ENCODE measurements at regions of chr3 and their contacts with region 1.

Region 1: GRCh38 chr3:168615493-168616020 is 519.8 kb upstream of the GOLIM4 start:
- DNase-seq: no peak
- ATAC-seq: peak; percentile 52
- H3K4me3 ChIP-seq: no peak overlapping the region
- H3K27ac ChIP-seq: no peak overlapping the region; the same call in 1 of the 2 replicates
- H3K4me1 ChIP-seq: peaks cover 4% of the 10 kb centered on the region; the same call in 1 of the 2 replicates
- H3K27me3 ChIP-seq: no peaks in the 10 kb centered on the region
- CTCF ChIP-seq: no peak
- EP300 ChIP-seq: no peak
- POLR2A ChIP-seq: no peak
- RAD21 ChIP-seq: no peak

Region 2: DNA sequence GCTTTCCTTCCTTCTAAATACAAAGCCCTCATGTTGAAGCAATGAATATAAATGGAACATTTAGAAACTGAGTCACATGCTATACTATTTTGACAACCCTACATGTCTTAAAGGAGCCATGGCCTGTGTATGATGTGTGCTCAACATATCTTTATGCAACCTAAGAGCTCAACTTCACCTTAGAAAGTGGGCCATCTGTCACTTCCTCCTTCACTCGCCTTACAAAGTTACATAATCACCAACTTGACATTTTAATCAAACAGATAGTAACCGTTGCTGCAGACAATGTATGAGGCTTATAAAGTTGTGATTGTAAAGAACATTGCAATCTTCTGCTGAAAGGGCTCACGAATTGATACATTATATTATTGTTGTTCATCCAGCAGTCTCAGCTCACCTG is 716.5 kb before region 1 on chr3:
- CTCF ChIA-PET with region 1: no interaction called
- POLR2A ChIA-PET with region 1: no interaction called
- RAD21 ChIA-PET with region 1: no interaction called
- SMC1A ChIA-PET with region 1: no interaction called
- in situ Hi-C with region 1: no loop called
- intact Hi-C with region 1: no loop called
- DNase-seq: no peak
- ATAC-seq: no peak
- H3K4me3 ChIP-seq: no peak overlapping the region
- H3K27ac ChIP-seq: no peak overlapping the region
- H3K4me1 ChIP-seq: no peaks in the 10 kb centered on the region
- H3K27me3 ChIP-seq: no peaks in the 10 kb centered on the region
- CTCF ChIP-seq: no peak
- EP300 ChIP-seq: no peak
- POLR2A ChIP-seq: no peak
- RAD21 ChIP-seq: no peak

Region 3: GRCh38 chr3:167983583-167983982 is 632.0 kb before region 1 on chr3:
- CTCF ChIA-PET with region 1: no interaction called
- POLR2A ChIA-PET with region 1: no interaction called
- RAD21 ChIA-PET with region 1: no interaction called
- SMC1A ChIA-PET with region 1: no interaction called
- in situ Hi-C with region 1: no loop called
- intact Hi-C with region 1: no loop called
- DNase-seq: no peak
- ATAC-seq: no peak
- H3K4me3 ChIP-seq: no peak overlapping the region
- H3K27ac ChIP-seq: no peak overlapping the region
- H3K4me1 ChIP-seq: no peaks in the 10 kb centered on the region
- H3K27me3 ChIP-seq: no peaks in the 10 kb centered on the region; a peak in 2 of 4 replicates
- CTCF ChIP-seq: no peak
- EP300 ChIP-seq: no peak
- POLR2A ChIP-seq: no peak
- RAD21 ChIP-seq: no peak

Region 4: GRCh38 chr3:168220556-168220955 is 395.0 kb before region 1 on chr3:
- CTCF ChIA-PET with region 1: no interaction called
- POLR2A ChIA-PET with region 1: no interaction called
- RAD21 ChIA-PET with region 1: no interaction called
- SMC1A ChIA-PET with region 1: no interaction called
- in situ Hi-C with region 1: no loop called
- intact Hi-C with region 1: no loop called
- DNase-seq: no peak
- ATAC-seq: no peak
- H3K4me3 ChIP-seq: no peak overlapping the region
- H3K27ac ChIP-seq: no peak overlapping the region
- H3K4me1 ChIP-seq: no peaks in the 10 kb centered on the region
- H3K27me3 ChIP-seq: 0 out of 4 replicates have a peak, but pooled peaks cover 0 to 2% of the 10 kb centered on the region in 2 experiments
- CTCF ChIP-seq: no peak
- EP300 ChIP-seq: no peak
- POLR2A ChIP-seq: no peak
- RAD21 ChIP-seq: no peak

Region 5: DNA sequence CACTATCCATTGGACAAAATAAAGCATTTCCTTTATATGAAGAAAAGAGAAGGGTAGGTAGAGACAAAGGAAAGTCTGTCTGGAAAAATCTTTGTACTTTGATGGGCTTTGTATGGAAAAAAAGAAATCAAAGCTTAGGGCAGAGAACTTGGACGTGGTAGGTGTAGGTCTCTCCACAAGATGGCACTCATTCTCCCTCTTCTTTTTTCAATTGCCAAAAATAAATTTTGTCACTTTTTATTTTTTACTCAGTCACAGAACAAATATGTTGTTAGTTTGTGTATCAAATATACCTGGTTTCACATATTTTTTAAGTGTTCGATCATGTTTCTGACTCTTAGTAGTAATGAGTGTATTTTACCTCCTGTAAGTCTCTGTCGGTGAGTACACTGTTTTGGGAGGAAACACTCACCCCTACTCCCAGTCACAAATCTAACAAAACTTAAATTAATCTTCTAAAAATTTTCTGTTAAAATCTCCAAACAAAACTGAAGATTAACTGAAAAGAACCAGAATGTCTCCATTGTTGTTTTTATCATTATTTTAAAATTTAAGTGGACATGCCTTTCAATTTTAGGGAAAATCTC is 104.0 kb before region 1 on chr3:
- CTCF ChIA-PET with region 1: interaction called, 66 read pairs
- POLR2A ChIA-PET with region 1: interaction called, 3 read pairs
- RAD21 ChIA-PET with region 1: interaction called, 37 read pairs
- SMC1A ChIA-PET with region 1: interaction called, 29 read pairs
- in situ Hi-C with region 1: loop called (anchors 5 kb)
- intact Hi-C with region 1: no loop called
- DNase-seq: no peak
- ATAC-seq: peak; percentile 50; the same call in 2 of the 3 replicates
- H3K4me3 ChIP-seq: no peak overlapping the region
- H3K27ac ChIP-seq: no peak overlapping the region
- H3K4me1 ChIP-seq: no peaks in the 10 kb centered on the region
- H3K27me3 ChIP-seq: no peaks in the 10 kb centered on the region
- CTCF ChIP-seq: peak; percentile 47 to 58 (median 49)
- EP300 ChIP-seq: no peak
- POLR2A ChIP-seq: no peak
- RAD21 ChIP-seq: peak; percentile 47

Region 6: DNA sequence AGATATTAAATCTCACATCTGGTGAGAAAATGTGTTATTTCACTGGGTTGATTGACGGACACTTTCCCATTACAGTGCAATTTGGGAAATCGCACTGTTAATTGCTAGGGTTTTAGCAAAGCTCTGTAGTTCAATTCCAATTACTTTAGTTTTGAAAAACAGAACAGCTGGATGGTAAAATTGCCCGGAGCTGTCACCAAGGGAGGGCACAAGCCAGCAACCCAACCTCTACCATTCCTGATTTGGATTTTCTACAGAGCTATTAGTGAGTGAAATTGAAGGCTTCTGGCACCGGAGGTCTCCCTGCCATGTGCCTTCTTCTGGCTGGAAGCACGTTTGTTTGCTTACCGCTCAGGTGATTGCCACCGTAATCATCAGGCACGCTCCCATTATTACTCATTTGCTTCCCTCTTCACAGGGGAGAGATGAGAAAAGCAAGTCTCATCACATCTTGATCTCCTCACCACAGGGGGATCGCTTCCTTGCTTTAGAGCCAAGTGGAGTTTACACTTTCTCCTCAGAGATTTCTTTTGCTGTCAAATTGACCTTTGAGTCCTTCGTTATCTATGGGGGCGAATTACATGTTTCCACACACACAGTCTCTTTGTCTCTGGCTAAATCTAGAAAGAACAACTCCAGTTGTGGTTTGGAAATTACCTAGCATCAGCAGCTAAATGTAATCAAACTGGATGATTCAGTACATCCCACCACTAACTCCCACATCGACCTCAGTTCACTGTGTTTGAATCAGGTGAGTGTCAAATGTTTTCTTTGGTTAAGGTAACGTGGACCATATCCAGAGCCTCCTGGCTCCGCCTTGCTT is 98.1 kb before region 1 on chr3:
- CTCF ChIA-PET with region 1: interaction called, 30 read pairs
- POLR2A ChIA-PET with region 1: interaction called, 3 read pairs
- RAD21 ChIA-PET with region 1: interaction called, 8 read pairs
- SMC1A ChIA-PET with region 1: interaction called, 15 read pairs
- in situ Hi-C with region 1: loop called (anchors 5 kb)
- intact Hi-C with region 1: no loop called
- DNase-seq: peak; percentile 41
- ATAC-seq: peak; percentile 84
- H3K4me3 ChIP-seq: no peak overlapping the region
- H3K27ac ChIP-seq: 0 out of 2 replicates have a peak overlapping the region, but pooled peaks have one; percentile 2
- H3K4me1 ChIP-seq: no peaks in the 10 kb centered on the region
- H3K27me3 ChIP-seq: no peaks in the 10 kb centered on the region
- CTCF ChIP-seq: no peak
- EP300 ChIP-seq: peak; percentile 48 to 87; a peak in 2 of 4 replicates
- POLR2A ChIP-seq: no peak
- RAD21 ChIP-seq: no peak

Region 7: DNA sequence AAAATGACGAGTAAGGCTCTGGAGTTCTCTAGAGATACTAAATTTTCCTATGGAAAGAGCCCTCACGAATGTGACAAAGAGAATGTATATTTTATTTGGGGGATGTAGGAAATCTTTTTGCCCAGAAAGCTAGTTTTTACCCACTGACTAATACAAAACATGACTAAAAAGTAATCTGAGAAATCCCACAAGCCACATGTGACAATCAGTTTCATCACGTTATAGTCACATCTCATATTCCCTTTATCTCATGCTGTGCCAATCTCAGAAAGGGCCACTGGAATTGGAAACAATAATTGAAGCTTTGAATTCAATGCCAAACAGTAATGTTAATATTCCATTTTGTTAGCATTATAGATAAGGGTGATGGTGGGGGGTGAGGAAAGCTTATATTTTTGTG is 10.8 kb before region 1 on chr3:
- CTCF ChIA-PET with region 1: interaction called, 16 read pairs
- POLR2A ChIA-PET with region 1: interaction called, 5 read pairs
- RAD21 ChIA-PET with region 1: interaction called, 4 read pairs
- SMC1A ChIA-PET with region 1: interaction called, 16 read pairs
- in situ Hi-C with region 1: no loop called
- intact Hi-C with region 1: no loop called
- DNase-seq: no peak
- ATAC-seq: peak; percentile 69
- H3K4me3 ChIP-seq: no peak overlapping the region
- H3K27ac ChIP-seq: no peak overlapping the region
- H3K4me1 ChIP-seq: no peaks in the 10 kb centered on the region
- H3K27me3 ChIP-seq: no peaks in the 10 kb centered on the region
- CTCF ChIP-seq: no peak
- EP300 ChIP-seq: no peak
- POLR2A ChIP-seq: no peak
- RAD21 ChIP-seq: no peak